AG04450 (cell line): ENCODE measurements at regions of chr11 and their contacts with region 1.

Region 1: GRCh38 chr11:128157423-128158298 is 429.7 kb downstream of the ETS1 start:
- DNase-seq: peak; percentile 41
- H3K4me3 ChIP-seq: peak overlapping the region; percentile 38; the same call in 1 of the 2 replicates
- H3K27ac ChIP-seq: no peak overlapping the region
- H3K27me3 ChIP-seq: peaks cover 12% of the 10 kb centered on the region
- CTCF ChIP-seq: peak; percentile 82

Region 2: DNA sequence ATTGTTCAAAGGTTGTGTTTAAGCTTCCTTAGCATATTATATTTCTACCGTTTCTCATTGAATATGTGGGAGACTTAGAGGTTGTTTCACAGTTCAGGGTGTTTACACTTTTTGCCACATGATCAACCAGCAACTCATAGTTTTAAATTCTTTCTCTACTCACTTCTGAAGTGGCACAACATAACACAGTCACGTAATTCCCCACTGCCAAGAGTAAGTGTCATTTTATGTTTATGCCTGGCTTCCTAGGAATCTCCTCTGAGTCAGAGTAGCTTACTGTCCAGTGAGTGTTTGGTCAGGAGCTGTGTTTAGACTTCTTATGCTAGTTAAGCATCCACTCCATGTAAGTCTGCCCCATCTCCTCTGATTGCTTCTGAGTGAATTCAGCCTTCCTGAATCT is 636.2 kb before region 1 on chr11:
- CTCF ChIA-PET with region 1: no interaction called
- POLR2A ChIA-PET with region 1: no interaction called
- DNase-seq: peak; percentile 16
- H3K4me3 ChIP-seq: no peak overlapping the region
- H3K27ac ChIP-seq: no peak overlapping the region
- H3K27me3 ChIP-seq: no peaks in the 10 kb centered on the region
- CTCF ChIP-seq: no peak

Region 3: GRCh38 chr11:128005562-128005961 is 152.1 kb before region 1 on chr11:
- CTCF ChIA-PET with region 1: interaction called, 10 read pairs
- POLR2A ChIA-PET with region 1: no interaction called
- DNase-seq: no peak
- H3K4me3 ChIP-seq: no peak overlapping the region
- H3K27ac ChIP-seq: no peak overlapping the region
- H3K27me3 ChIP-seq: no peaks in the 10 kb centered on the region
- CTCF ChIP-seq: no peak

Region 4: DNA sequence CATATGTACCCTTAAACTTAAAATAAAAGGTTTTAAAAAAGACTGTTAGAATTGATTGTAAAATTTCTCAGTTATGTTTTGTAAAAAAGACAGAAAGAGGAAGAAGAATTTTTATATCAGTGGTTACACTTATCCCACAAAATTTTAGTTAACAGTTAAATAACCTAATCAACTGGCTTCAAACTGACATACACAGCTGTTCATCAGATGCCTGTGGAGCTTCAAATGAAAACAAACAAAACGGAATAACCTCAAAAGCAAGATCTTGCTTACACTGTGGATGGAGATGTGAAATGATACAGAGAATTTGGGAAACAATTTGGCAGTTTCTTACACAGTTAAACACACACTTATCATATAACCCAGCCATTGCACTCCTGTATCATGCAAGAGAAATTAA is 91.3 kb before region 1 on chr11:
- CTCF ChIA-PET with region 1: interaction called, 14 read pairs
- POLR2A ChIA-PET with region 1: no interaction called
- DNase-seq: no peak
- H3K4me3 ChIP-seq: no peak overlapping the region
- H3K27ac ChIP-seq: no peak overlapping the region
- H3K27me3 ChIP-seq: peaks cover 2% of the 10 kb centered on the region
- CTCF ChIP-seq: no peak

Region 5: DNA sequence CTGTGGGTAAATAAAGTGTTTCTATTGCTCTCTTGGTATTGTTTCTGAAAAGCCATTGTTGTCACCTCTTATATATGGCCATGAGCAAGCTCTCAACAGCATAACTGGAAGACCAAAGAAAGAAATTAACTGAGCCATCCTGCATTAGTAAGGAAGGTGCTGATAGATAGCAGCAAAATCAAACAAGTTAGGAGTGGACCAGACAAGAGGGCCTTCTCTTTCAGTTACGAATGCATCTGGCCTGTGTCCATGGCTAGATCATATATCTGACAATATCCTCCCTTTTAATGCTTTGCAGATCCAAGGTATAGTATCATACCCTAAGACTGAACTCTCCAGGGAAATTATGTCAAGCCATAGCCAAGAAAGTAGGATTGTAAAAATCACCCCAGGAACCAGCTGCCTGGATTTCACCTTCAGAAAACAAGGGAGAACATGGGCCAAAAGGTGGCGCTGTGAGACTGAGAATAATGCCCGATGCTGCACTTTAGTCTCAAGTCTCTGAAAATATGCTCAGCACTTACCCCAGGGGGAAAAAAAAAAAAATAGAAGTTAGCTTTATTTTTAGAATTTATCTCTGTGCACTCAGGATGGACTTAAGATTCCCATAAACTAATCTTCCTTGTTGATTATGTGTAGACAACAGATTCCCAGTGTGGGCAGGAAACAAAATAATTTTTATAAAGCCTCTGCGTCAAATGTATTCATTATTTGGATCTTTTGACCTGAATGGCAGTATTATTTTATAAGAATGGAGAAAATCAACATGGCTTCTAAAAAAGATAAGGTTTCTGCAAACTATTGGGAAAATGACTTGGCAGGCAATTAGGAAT is 14.6 kb after region 1 on chr11:
- CTCF ChIA-PET with region 1: interaction called, 172 read pairs
- POLR2A ChIA-PET with region 1: no interaction called
- DNase-seq: peak; percentile 72
- H3K4me3 ChIP-seq: no peak overlapping the region
- H3K27ac ChIP-seq: no peak overlapping the region
- H3K27me3 ChIP-seq: no peaks in the 10 kb centered on the region
- CTCF ChIP-seq: peak; percentile 83

Region 6: GRCh38 chr11:128506999-128507611 is 349.4 kb after region 1 on chr11:
- CTCF ChIA-PET with region 1: interaction called, 10 read pairs
- POLR2A ChIA-PET with region 1: no interaction called
- DNase-seq: peak; percentile 92
- H3K4me3 ChIP-seq: peak overlapping the region; percentile 34
- H3K27ac ChIP-seq: peak overlapping the region; percentile 92
- H3K27me3 ChIP-seq: no peaks in the 10 kb centered on the region
- CTCF ChIP-seq: no peak

Region 7: DNA sequence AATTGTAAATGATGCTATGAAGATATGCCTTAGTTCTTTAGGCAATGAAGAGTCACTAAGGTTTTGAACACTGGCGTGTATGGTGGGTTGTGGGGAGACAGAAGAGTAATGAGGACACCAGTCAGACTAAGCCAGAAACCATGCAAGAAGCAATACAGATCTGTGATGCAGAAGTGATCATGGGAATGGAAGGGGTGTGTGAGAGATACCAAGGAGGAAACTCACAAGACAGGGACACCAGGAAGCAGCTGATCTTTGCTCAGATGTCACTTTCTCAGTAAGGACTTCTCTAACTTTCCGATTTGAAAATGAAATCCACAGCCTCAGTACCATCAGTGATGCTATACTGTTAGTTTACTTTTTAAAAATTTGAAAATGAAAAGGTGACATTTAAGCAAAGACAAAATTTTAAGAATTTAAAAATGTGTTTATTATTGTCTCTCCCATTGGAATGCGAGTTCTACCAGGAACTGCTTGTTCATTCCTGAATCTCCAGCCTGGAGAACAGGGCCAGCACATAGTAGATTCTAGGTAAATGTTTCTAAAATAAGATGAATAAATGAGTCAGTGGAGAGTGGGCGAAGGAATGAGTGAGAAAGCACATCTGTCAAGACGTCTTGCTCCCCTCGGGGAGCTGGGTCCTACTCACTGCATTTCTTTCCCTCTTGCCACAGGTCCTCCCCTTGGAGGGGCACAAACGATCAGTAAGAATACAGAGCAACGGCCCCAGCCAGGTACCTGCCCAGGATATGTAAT is 649.0 kb after region 1 on chr11:
- CTCF ChIA-PET with region 1: interaction called, 13 read pairs
- POLR2A ChIA-PET with region 1: no interaction called
- DNase-seq: no peak
- H3K4me3 ChIP-seq: no peak overlapping the region
- H3K27ac ChIP-seq: peak overlapping the region; percentile 34
- H3K27me3 ChIP-seq: no peaks in the 10 kb centered on the region
- CTCF ChIP-seq: no peak

Region 8: GRCh38 chr11:128956401-128957201 is 798.9 kb after region 1 on chr11:
- CTCF ChIA-PET with region 1: interaction called, 35 read pairs
- POLR2A ChIA-PET with region 1: no interaction called
- DNase-seq: peak; percentile 47
- H3K4me3 ChIP-seq: no peak overlapping the region
- H3K27ac ChIP-seq: no peak overlapping the region
- H3K27me3 ChIP-seq: peaks cover 5% of the 10 kb centered on the region
- CTCF ChIP-seq: peak; percentile 74